ENCODE measurements at regions of chr4 and their contacts with region 1.

Region 1: DNA sequence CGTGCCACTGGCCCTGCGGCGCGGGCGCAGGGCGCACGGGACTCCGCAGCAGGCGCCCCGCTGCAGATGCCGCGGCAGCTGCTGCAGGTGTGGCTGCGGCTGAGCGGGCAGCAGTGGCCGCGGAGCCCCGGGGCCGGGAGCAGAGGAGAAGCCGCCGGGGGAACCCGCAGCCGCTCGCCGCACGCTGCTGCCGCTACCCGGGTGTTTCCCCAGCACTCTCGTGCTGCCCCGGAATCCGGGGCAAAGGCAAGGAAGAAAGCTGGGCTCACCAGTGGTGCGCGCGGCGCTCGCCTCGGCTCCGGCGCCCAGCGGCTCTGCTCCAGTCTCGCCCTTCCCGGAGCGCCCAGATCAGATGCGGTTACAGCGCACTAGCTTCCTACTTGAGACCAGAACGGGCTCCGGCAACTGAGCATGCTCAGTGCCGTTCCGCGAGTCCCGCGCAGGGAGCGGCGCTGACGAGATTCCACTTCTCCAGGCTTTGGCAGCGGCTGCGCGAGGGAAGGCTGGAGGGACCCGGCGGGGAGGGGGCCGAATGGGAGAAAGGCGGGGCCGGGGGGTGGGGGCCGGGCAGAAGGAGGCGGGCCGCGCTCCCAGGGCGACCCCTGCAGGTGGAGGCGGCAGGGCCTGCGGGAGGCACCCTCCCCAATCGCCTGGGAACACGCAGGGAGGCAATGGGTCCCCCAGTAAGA is at the start of gene APBB2:
- DNase-seq: peak; percentile 98
- H3K4me3 ChIP-seq: peak within 1 kb of the TSS; percentile 87
- H3K27ac ChIP-seq: peak within 1 kb of the TSS; percentile 7; the same call in 1 of the 2 replicates
- H3K4me1 ChIP-seq: peaks cover 15% of the 10 kb centered on the region
- H3K27me3 ChIP-seq: no peaks in the 10 kb centered on the region
- total RNA-seq, gene APBB2: 61.0 and 83.8 TPM in 2 replicates

Region 2: GRCh38 chr4:40924096-40924792 is 290.0 kb before region 1 on chr4:
- in situ Hi-C with region 1: loop called (anchors 10 kb)
- DNase-seq: peak; percentile 80
- H3K4me3 ChIP-seq: no peak overlapping the region
- H3K27ac ChIP-seq: peak overlapping the region; percentile 78
- H3K4me1 ChIP-seq: peaks cover 4% of the 10 kb centered on the region; the same call in 1 of the 2 replicates
- H3K27me3 ChIP-seq: no peaks in the 10 kb centered on the region

Region 3: DNA sequence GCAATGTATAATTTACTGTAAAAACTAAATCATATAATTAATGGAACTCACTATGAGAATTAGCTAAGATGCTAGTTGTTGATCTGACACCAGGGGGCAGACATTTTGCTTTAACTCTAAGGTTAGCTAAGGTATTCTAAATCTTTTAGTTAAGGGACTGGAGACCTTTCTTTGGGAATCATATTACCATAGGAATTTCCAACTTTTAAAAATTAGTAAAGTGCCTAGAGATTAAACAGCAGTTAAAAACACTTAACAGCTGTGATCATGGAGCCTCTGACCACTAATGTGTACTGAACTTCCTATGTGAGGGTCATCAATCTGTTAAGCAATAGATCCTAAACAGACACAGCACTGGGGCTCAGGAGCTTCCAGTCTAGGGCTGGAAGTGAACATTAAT is 237.9 kb before region 1 on chr4:
- in situ Hi-C with region 1: loop called (anchors 10 kb)
- DNase-seq: peak; percentile 72
- H3K4me3 ChIP-seq: no peak overlapping the region
- H3K27ac ChIP-seq: no peak overlapping the region
- H3K4me1 ChIP-seq: peaks cover 6% of the 10 kb centered on the region; the same call in 1 of the 2 replicates
- H3K27me3 ChIP-seq: no peaks in the 10 kb centered on the region

Measured in GM23248 (cell line).